HEK293 (cell line): ENCODE measurements at regions of chr7 and their contacts with region 1.

Region 1: GRCh38 chr7:121366852-121367431 is 29.2 kb downstream of the FAM3C start:
- H3K4me3 ChIP-seq: no peak overlapping the region
- H3K27ac ChIP-seq: no peak overlapping the region
- H3K4me1 ChIP-seq: no peaks in the 10 kb centered on the region
- CTCF ChIP-seq: peak; percentile 38; the same call in 1 of the 2 replicates

Region 2: GRCh38 chr7:121379930-121380329 is 13.0 kb after region 1 on chr7:
- CTCF ChIA-PET with region 1: interaction called, 15 read pairs
- POLR2A ChIA-PET with region 1: no interaction called
- H3K4me3 ChIP-seq: no peak overlapping the region
- H3K27ac ChIP-seq: no peak overlapping the region
- H3K4me1 ChIP-seq: no peaks in the 10 kb centered on the region
- CTCF ChIP-seq: no peak

Region 3: DNA sequence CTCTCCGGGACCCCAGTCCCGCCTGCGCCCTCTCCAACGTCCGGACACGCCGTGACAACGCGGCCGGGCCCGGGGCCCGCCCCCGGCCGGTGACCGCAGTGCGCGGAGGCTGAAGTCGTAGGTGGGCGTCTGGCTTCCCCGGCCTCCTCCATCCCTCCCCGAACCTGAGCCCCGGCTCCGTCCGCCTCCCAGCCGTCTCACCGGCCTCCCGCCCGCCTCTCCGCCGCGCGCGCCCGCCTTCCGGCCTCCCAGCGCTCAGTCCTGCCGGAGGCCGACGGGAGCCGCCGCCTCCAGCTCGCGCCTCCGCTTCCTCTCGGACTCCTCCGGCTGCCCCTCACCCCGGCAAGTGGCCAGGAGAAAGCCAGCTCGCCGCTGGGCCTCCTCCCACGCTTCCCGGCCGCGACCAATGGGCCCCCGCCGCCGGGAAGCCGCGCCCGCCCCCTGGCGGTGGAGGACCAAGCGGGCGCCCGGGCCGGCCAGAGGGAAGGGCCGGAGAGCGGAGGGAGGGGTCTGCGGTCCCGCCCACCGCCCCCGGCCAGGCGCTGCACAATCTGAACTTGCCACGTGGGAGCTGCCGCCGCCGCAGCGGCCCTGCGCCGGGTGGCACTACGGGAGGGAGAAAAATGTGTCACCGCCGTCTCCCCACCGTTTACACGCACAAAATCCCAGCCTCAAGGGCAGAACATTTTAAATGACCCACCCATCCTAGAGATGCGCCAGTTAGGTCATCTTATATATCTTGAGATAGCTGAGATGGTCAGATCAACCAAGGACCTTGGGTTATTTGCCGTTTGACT is 29.2 kb after region 1 on chr7 and contains the start of gene FAM3C:
- CTCF ChIA-PET with region 1: interaction called, 29 read pairs
- POLR2A ChIA-PET with region 1: interaction called, 8 read pairs
- H3K4me3 ChIP-seq: peak within 1 kb of the TSS; percentile 83
- H3K27ac ChIP-seq: peak within 1 kb of the TSS; percentile 73
- H3K4me1 ChIP-seq: no peaks in the 10 kb centered on the region
- CTCF ChIP-seq: peak; percentile 75; the same call in 1 of the 2 replicates

Region 4: GRCh38 chr7:121547544-121548092 is 180.7 kb after region 1 on chr7:
- CTCF ChIA-PET with region 1: interaction called, 36 read pairs
- POLR2A ChIA-PET with region 1: no interaction called
- H3K4me3 ChIP-seq: no peak overlapping the region
- H3K27ac ChIP-seq: no peak overlapping the region
- H3K4me1 ChIP-seq: peaks cover 5% of the 10 kb centered on the region; the same call in 1 of the 2 replicates
- CTCF ChIP-seq: peak; percentile 47; the same call in 1 of the 2 replicates

Region 5: DNA sequence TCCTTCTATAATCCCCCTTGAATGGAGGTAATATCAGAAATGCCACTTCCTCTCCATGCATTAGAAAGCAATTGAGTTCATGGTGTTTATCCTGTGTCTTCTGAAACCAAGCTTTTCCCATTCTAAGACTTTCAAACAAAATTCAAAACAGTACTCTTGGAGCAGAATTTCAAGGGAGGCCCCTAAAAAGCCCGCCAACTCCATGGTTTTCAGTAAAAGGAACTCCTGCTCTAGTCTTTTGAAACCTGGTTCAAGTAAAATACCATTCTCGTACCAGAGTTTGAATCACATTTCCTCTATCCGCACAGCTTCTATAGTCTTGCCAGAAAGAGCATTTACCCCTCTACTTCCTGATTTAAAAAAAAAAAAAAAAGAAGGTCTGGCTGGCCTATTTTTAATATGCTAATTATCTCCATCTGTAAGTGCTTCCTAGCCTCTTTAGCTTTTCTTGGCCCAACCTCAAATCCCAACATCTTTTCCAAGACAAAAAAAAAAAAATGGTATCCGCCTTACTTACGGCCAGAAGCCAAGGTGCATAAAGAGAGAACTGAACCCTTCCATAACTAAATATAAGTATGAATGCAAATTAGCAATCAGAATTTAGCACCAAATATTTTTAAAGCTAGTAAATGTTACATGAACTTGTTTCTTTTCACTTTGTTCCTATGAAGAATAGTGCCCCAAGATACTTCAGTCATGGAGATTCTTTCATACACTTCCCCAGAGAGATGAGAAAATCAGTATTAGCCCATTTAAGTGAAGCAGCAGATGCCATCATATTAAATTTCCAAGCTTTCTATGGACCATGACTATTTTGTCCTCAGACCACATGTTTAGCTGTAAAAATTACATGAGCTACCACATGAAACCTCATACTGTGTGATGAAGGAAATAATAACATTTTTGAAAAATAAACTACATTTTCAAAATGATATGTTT is 229.1 kb after region 1 on chr7:
- CTCF ChIA-PET with region 1: no interaction called
- POLR2A ChIA-PET with region 1: no interaction called
- H3K4me3 ChIP-seq: no peak overlapping the region
- H3K27ac ChIP-seq: no peak overlapping the region
- H3K4me1 ChIP-seq: no peaks in the 10 kb centered on the region
- CTCF ChIP-seq: no peak